Dorsolateral prefrontal cortex (tissue), 120 donors: ENCODE measurements at regions of chr1 and their contacts with region 1.

Region 1: DNA sequence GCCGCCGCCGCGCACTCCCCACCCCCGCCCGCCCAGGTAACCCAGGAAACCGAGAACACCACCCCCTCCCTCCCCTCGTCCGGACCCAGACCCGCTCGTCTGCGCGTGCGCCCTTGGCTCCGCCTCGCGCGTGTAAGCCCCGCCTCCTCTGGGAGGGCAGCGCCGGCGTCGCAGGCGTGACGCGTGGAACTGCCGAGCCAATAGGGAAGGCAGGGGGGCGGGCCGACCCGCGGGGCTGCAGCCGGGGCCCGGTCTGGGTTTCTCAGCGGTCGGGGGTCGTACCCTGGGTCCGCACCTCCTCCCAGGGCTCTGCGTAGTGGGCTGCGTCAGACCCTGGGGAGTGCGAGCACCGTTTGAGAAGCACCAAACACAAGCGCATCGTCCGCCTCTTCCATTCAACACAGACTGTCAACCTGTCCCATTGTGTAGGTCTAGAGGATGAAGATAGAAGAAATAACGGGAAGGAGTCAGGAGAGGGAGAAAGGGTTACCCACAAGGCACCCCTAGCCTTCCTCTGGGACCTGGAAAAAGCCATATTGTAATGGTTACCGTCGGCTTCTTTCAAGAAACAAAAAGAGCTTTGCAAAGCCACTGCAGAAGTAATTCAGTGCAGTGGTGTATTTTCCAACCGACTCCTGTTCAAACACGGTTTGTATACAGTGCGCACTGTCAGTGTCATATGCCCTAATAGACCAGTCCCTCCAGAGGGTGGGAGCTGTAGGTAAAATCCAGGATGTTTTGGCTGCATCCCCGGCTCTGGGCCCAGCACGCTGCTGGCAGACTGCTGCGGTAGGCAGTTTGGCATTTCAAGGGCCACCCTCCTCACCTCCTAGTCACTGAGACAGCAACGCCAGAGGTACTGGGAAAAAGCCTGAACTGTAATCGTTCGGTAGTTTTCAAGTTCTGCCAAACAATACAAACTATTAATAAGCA is 473 bp upstream of the LYST start:
- DNase-seq: peak; percentile 93 to 99 (median 96)
- H3K4me3 ChIP-seq: peak overlapping the region; percentile 56 to 100 (median 97)
- H3K27ac ChIP-seq: peak overlapping the region; percentile 49 to 98 (median 92)
- H3K27me3 ChIP-seq: no peaks in the 10 kb centered on the region
- CTCF ChIP-seq: peak in 4 of 56 donors; percentile 13 to 24 (median 17)

Region 2: GRCh38 chr1:235504496-235505222 is 362.5 kb before region 1 on chr1:
- intact Hi-C with region 1: loop called in 1 of 2 experiments (anchors 2 kb)
- DNase-seq: peak; percentile 98 to 99 (median 99)
- H3K4me3 ChIP-seq: peak overlapping the region; percentile 67 to 95 (median 85)
- H3K27ac ChIP-seq: peak overlapping the region; percentile 72 to 100 (median 97)
- H3K27me3 ChIP-seq: no peaks in the 10 kb centered on the region
- CTCF ChIP-seq: peak; percentile 61 to 99 (median 94)